ENCODE measurements at regions of chr17 and their contacts with region 1.

Region 1: DNA sequence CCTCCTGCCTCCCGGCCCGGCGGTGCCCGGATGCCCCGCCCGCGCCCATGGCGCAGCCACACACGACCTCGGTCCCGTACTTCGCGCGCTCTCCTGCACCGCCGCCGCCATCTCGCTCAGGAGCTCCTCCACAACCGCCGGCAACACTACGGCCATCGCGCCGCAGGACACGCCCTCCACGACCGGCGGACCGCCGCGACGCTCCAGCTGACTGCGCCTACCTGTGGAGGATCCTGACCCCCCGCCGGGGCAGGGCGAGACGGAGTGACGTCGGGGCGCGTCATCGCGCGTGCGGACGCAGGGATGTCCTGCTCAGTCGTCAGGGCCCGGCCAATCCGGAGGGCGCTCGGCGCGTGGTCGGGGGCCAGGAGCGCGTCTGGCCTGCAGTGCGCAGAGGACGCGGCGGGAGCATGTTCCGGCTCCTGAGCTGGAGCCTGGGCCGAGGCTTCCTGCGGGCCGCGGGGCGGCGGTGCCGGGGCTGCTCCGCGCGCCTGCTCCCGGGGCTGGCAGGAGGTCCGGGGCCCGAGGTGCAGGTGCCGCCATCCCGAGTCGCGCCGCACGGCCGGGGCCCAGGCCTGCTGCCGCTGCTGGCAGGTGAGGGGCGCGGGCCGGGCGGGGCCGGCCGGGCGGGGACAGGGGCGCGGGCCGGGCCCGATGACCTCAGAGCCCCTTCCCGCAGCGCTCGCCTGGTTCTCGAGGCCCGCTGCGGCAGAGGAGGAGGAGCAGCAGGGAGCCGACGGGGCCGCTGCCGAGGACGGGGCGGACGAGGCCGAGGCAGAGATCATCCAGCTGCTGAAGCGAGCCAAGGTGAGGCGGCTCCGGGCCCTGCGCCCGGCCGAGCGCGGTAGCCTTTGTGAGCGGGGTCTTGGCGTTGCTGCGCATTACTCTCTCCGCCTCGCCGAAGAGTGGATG is at the starts of genes TTC19 and ZSWIM7:
- DNase-seq: peak; percentile 95
- H3K4me3 Mint-ChIP-seq: peak within 1 kb of the TSS; percentile 94
- H3K27ac Mint-ChIP-seq: peak within 1 kb of the TSS; percentile 97
- H3K4me1 Mint-ChIP-seq: peaks cover 34% of the 10 kb centered on the region
- H3K27me3 Mint-ChIP-seq: no peaks in the 10 kb centered on the region
- total RNA-seq, gene TTC19: 22.7 to 25.6 TPM
- total RNA-seq, gene ZSWIM7: 7.2 to 10.1 TPM

Region 2: DNA sequence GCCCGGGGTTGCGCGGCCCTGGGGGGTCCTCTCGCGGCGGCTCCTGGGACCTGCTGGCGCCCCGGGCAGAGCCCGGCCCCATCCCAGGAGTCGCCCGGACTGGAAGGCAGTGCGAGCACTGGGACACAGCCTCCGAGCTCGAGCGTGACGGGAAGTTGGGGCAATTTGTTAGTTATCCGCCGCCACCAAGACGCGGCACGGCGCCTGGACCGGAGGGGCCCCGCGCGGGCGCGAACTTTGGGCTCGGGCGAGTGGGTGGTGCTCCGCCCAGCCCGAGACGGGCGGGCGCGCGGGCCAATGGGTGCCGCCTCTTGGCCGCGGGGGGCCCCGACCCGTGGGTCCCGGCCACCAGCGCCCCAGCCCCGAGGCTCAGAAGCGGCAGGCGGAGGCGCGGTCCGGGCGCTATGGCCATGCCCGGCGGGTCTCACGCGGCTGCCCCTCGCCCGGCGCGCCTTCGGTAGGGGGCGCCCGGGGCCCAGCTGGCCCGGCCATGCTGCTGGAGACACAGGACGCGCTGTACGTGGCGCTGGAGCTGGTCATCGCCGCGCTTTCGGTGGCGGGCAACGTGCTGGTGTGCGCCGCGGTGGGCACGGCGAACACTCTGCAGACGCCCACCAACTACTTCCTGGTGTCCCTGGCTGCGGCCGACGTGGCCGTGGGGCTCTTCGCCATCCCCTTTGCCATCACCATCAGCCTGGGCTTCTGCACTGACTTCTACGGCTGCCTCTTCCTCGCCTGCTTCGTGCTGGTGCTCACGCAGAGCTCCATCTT is 54.8 kb before region 1 on chr17 and contains the start of gene ADORA2B:
- CTCF ChIA-PET with region 1: interaction called, 17 read pairs
- POLR2A ChIA-PET with region 1: interaction called, 3 read pairs
- DNase-seq: peak; percentile 34
- H3K4me3 Mint-ChIP-seq: peak within 1 kb of the TSS; percentile 54
- H3K27ac Mint-ChIP-seq: no peak within 1 kb of the TSS
- H3K4me1 Mint-ChIP-seq: peaks cover 11% of the 10 kb centered on the region
- H3K27me3 Mint-ChIP-seq: peaks cover 59% of the 10 kb centered on the region
- total RNA-seq, gene ADORA2B: 0.13 to 0.40 TPM

Region 3: GRCh38 chr17:15957608-15958307 is 41.9 kb before region 1 on chr17:
- CTCF ChIA-PET with region 1: interaction called, 4 read pairs
- POLR2A ChIA-PET with region 1: interaction called, 15 read pairs
- DNase-seq: no peak
- H3K4me3 Mint-ChIP-seq: no peak overlapping the region
- H3K27ac Mint-ChIP-seq: no peak overlapping the region
- H3K4me1 Mint-ChIP-seq: peaks cover 30% of the 10 kb centered on the region
- H3K27me3 Mint-ChIP-seq: peaks cover 65% of the 10 kb centered on the region

Region 4: GRCh38 chr17:15973016-15973415 is 26.7 kb before region 1 on chr17:
- CTCF ChIA-PET with region 1: no interaction called
- POLR2A ChIA-PET with region 1: no interaction called
- DNase-seq: no peak
- H3K4me3 Mint-ChIP-seq: no peak overlapping the region
- H3K27ac Mint-ChIP-seq: no peak overlapping the region
- H3K4me1 Mint-ChIP-seq: no peaks in the 10 kb centered on the region
- H3K27me3 Mint-ChIP-seq: peaks cover 17% of the 10 kb centered on the region

Region 5: DNA sequence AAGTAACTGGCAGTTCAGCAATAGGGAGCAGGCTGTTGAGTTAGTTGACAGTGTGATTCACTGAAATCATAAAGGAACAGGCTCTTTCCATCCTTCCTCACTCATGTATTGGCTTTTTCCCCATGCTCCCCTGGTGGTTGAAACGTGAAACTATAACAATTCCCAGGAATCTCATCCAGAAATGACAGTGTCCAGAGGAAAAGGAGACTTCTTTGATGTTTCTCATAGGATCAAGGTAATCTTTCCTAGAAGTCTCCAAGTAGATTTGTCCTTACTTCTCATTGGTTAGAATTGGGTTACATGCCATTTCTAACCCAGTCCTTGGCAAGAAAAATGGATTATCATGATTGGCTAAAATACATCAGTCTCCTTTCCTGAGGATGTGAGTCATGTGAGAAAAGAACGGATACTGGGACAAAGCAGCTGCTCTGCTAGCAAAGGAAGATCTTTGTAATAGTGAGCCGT is 14.3 kb after region 1 on chr17:
- CTCF ChIA-PET with region 1: interaction called, 4 read pairs
- POLR2A ChIA-PET with region 1: interaction called, 22 read pairs
- DNase-seq: no peak
- H3K4me3 Mint-ChIP-seq: no peak overlapping the region
- H3K27ac Mint-ChIP-seq: no peak overlapping the region
- H3K4me1 Mint-ChIP-seq: peaks cover 3% of the 10 kb centered on the region
- H3K27me3 Mint-ChIP-seq: no peaks in the 10 kb centered on the region

Region 6: GRCh38 chr17:16189791-16190348 is 190.2 kb after region 1 on chr17:
- CTCF ChIA-PET with region 1: no interaction called
- POLR2A ChIA-PET with region 1: no interaction called
- DNase-seq: no peak
- H3K4me3 Mint-ChIP-seq: no peak overlapping the region
- H3K27ac Mint-ChIP-seq: no peak overlapping the region
- H3K4me1 Mint-ChIP-seq: peaks cover 12% of the 10 kb centered on the region
- H3K27me3 Mint-ChIP-seq: no peaks in the 10 kb centered on the region